Activated B cell treated with CpG ODN at 0.5 μM for 24 hours (primary cell): ENCODE measurements at regions of chr10 and their contacts with region 1.

Region 1: GRCh38 chr10:7525314-7526016 is 114.6 kb upstream of the SFMBT2 start:
- DNase-seq: no peak
- ATAC-seq: peak; percentile 82
- H3K4me3 Mint-ChIP-seq: no peak overlapping the region
- H3K27ac Mint-ChIP-seq: no peak overlapping the region
- H3K4me1 Mint-ChIP-seq: peaks cover 14% of the 10 kb centered on the region
- H3K27me3 Mint-ChIP-seq: peaks cover 4% of the 10 kb centered on the region
- CTCF ChIP-seq: no peak

Region 2: DNA sequence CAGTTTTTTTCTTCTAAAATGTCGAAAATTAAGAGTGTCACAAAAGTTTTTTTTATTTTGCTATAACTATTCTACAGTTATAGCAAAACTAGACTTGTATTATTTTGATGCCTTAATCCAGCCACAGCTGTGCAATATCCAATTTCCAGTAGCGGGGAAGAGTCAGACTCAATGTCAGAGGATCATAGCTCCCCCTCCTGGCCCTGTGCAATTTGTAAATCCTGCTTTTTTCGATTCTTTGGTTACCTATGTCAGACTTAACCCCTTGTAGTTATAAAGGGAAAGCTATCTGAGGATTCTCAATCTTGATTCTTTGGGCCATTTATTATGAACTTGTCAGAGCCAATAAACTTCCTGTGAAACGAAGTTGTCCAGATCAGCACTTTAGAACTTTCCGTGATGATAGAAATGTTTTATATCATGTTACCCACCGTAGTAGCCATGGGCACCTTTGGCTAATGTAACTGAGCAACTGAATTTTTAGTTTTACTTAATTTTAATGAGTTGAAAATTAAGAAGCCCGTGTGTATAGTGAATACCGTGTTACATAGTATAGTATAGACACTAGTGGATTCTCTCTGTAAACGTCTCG is 857.7 kb before region 1 on chr10:
- CTCF ChIA-PET with region 1: interaction called, 4 read pairs
- POLR2A ChIA-PET with region 1: no interaction called
- intact Hi-C with region 1: loop called (anchors 10 kb)
- DNase-seq: no peak
- ATAC-seq: no peak
- H3K4me3 Mint-ChIP-seq: no peak overlapping the region
- H3K27ac Mint-ChIP-seq: no peak overlapping the region
- H3K4me1 Mint-ChIP-seq: no peaks in the 10 kb centered on the region
- H3K27me3 Mint-ChIP-seq: peaks cover 8% of the 10 kb centered on the region
- CTCF ChIP-seq: no peak

Region 3: GRCh38 chr10:7471720-7472367 is 53.6 kb before region 1 on chr10:
- CTCF ChIA-PET with region 1: interaction called, 8 read pairs
- POLR2A ChIA-PET with region 1: interaction called, 11 read pairs
- intact Hi-C with region 1: loop called (anchors 1 kb)
- DNase-seq: peak; percentile 59
- ATAC-seq: peak; percentile 89
- H3K4me3 Mint-ChIP-seq: peak overlapping the region; percentile 73
- H3K27ac Mint-ChIP-seq: peak overlapping the region; percentile 90
- H3K4me1 Mint-ChIP-seq: peaks cover 78% of the 10 kb centered on the region
- H3K27me3 Mint-ChIP-seq: no peaks in the 10 kb centered on the region
- CTCF ChIP-seq: no peak

Region 4: DNA sequence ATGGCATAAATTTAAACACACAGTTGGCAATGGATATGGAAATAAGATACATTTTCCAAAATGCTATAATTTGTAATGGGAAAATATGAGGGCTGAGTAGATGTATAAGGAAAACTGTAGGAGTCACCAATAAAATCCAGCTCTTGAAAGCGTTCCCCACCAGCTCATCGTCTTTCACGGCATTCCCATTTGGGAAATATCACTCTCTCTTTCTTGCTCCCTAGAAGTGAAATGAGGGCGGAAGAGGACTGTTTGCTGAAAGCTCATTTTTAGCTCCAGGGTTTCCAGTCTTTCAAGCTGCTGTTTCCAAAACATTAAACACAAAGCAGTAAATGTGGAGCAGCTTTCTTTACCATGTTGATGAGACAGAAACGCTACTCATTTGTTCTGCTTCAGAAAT is 10.0 kb before region 1 on chr10:
- CTCF ChIA-PET with region 1: interaction called, 11 read pairs
- POLR2A ChIA-PET with region 1: no interaction called
- intact Hi-C with region 1: no loop called
- DNase-seq: no peak
- ATAC-seq: no peak
- H3K4me3 Mint-ChIP-seq: no peak overlapping the region
- H3K27ac Mint-ChIP-seq: no peak overlapping the region
- H3K4me1 Mint-ChIP-seq: peaks cover 3% of the 10 kb centered on the region
- H3K27me3 Mint-ChIP-seq: no peaks in the 10 kb centered on the region
- CTCF ChIP-seq: no peak

Region 5: DNA sequence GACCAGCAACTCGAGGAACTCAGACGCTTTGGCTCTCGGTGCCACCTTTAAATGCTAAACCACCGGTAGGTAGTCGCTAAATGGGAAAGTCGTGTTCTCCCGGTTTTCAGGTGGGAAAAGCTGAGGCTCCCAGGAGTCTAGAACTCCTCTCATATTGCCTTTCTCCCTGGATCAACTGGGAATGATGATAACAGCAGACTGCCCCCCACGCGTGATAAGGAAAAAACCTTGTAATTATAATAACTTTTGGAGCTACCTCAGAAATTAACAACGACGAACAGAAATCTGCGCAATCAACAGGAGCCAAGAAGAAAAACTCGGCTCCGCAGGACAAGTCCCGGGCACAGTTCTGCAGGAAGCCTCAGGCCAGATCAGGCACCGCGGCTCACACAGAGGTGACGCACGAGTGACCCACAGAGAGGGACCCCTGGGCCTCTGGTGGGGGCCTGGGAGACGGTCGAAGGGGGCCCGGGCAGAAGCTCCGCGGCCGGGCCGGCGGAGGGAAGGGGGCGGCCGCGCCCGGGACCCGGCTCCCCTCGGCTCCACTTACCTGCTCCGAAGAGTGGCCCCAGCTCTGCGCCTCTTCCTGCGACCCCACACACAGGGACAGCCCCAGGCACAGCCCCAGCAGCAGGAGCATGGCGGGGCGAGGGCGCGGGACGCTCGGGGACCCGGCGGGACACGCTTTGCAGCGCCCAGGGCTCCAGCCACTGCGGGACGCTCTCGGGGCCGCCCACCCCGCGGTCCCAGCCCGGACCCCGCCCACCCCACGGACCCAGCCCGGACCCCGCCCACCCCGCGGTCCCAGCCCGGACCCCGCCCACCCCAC is 141.0 kb after region 1 on chr10 and contains the start of gene ITIH5:
- CTCF ChIA-PET with region 1: no interaction called
- POLR2A ChIA-PET with region 1: no interaction called
- intact Hi-C with region 1: loop called (anchors 5 kb)
- DNase-seq: no peak
- ATAC-seq: no peak
- H3K4me3 Mint-ChIP-seq: peak within 1 kb of the TSS; percentile 75
- H3K27ac Mint-ChIP-seq: no peak within 1 kb of the TSS
- H3K4me1 Mint-ChIP-seq: peaks cover 14% of the 10 kb centered on the region
- H3K27me3 Mint-ChIP-seq: peaks cover 48% of the 10 kb centered on the region
- CTCF ChIP-seq: no peak
- total RNA-seq, gene ITIH5: not detected in 2 replicates

Region 6: DNA sequence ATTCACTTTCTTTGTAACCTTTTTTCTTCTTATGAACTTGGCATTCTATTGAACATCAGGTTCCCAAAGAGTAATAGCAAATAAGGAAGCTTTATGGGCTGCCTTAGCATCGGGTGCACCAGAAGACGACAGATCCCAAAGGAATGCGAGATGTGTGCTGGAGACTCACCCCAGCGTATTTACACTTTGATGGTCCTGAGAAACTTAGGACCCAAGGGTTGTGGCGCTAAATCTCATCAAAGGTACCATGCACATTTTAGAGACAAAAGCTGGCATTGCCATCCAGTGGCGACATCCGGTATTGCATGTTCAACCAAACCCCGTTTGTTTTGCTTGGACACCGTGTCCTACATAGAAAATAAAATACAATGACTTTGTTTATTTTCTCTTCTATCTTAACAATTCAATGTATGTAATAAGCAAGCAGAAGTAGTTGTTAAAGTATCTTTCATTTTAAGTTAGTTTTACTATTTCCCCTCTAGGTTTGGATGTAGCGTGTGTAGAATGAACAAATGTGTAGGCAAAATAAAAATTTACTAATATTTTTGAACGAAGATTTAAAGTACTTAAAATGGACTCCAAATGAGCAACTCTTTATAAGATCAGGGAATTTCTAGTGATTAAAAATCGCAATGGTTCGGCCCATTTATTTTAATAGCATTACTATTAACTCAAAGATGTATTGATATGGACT is 1683.8 kb after region 1 on chr10:
- CTCF ChIA-PET with region 1: interaction called, 32 read pairs
- POLR2A ChIA-PET with region 1: no interaction called
- intact Hi-C with region 1: loop called (anchors 1 kb)
- DNase-seq: peak; percentile 42
- ATAC-seq: no peak
- H3K4me3 Mint-ChIP-seq: no peak overlapping the region
- H3K27ac Mint-ChIP-seq: no peak overlapping the region
- H3K4me1 Mint-ChIP-seq: no peaks in the 10 kb centered on the region
- H3K27me3 Mint-ChIP-seq: peaks cover 4% of the 10 kb centered on the region
- CTCF ChIP-seq: peak; percentile 62